Common myeloid progenitor, CD34-positive (primary cell): ENCODE measurements at regions of chr12 and their contacts with region 1.

Region 1: GRCh38 chr12:48903982-48904411 is 21.3 kb downstream of the FKBP11 start:
- DNase-seq: peak; percentile 90 to 94 (median 93)
- H3K4me3 ChIP-seq: peak overlapping the region in 6 of 7 experiments; percentile 48 to 77 (median 66)
- H3K27ac ChIP-seq: peak overlapping the region in 1 of 2 experiments; percentile 69
- H3K4me1 ChIP-seq: peaks cover 0 to 13% (median 12%) of the 10 kb centered on the region in 4 experiments
- H3K27me3 ChIP-seq: peaks cover 0 to 2% (median 0%) of the 10 kb centered on the region in 5 experiments

Region 2: GRCh38 chr12:48890657-48891418 is 13.2 kb before region 1 on chr12:
- CTCF ChIA-PET with region 1: interaction called, 41 read pairs
- POLR2A ChIA-PET with region 1: no interaction called
- DNase-seq: peak; percentile 60 to 73 (median 67)
- H3K4me3 ChIP-seq: peak overlapping the region in 2 of 7 experiments; percentile 22 to 50
- H3K27ac ChIP-seq: no peak overlapping the region
- H3K4me1 ChIP-seq: peaks cover 0 to 7% (median 2%) of the 10 kb centered on the region in 4 experiments
- H3K27me3 ChIP-seq: peaks cover 3 to 18% (median 5%) of the 10 kb centered on the region in 5 experiments

Region 3: GRCh38 chr12:48917857-48918537 is 14.0 kb after region 1 on chr12:
- CTCF ChIA-PET with region 1: interaction called, 48 read pairs
- POLR2A ChIA-PET with region 1: interaction called, 4 read pairs
- DNase-seq: peak in 2 of 3 donors; percentile 60 to 67
- H3K4me3 ChIP-seq: peak overlapping the region in 1 of 7 experiments; percentile 38
- H3K27ac ChIP-seq: no peak overlapping the region
- H3K4me1 ChIP-seq: peaks cover 4 to 15% (median 9%) of the 10 kb centered on the region in 4 experiments
- H3K27me3 ChIP-seq: no peaks in the 10 kb centered on the region

Region 4: GRCh38 chr12:48924617-48925303 is 20.8 kb after region 1 on chr12:
- CTCF ChIA-PET with region 1: interaction called, 54 read pairs
- POLR2A ChIA-PET with region 1: no interaction called
- DNase-seq: peak; percentile 78 to 86 (median 84)
- H3K4me3 ChIP-seq: peak overlapping the region; percentile 75 to 99 (median 96)
- H3K27ac ChIP-seq: peak overlapping the region; percentile 46 to 74
- H3K4me1 ChIP-seq: peaks cover 0 to 13% (median 9%) of the 10 kb centered on the region in 4 experiments
- H3K27me3 ChIP-seq: no peaks in the 10 kb centered on the region

Region 5: GRCh38 chr12:48936379-48936979 is 32.5 kb after region 1 on chr12:
- CTCF ChIA-PET with region 1: interaction called, 54 read pairs
- POLR2A ChIA-PET with region 1: no interaction called
- DNase-seq: peak; percentile 69 to 85 (median 75)
- H3K4me3 ChIP-seq: no peak overlapping the region
- H3K27ac ChIP-seq: no peak overlapping the region
- H3K4me1 ChIP-seq: peaks cover 0 to 22% (median 17%) of the 10 kb centered on the region in 4 experiments
- H3K27me3 ChIP-seq: no peaks in the 10 kb centered on the region